CD8-positive, alpha-beta T cell (primary cell): ENCODE measurements at regions of chr12 and their contacts with region 1.

Region 1: GRCh38 chr12:88035271-88035906 is 6.2 kb upstream of the C12orf50 start:
- DNase-seq: peak; percentile 65 to 91 (median 85)
- ATAC-seq: peak; percentile 97
- H3K4me3 ChIP-seq: peak overlapping the region; percentile 75 to 85
- H3K4me3 Mint-ChIP-seq: peak overlapping the region; percentile 96
- H3K27ac ChIP-seq: peak overlapping the region; percentile 67 to 73
- H3K27ac Mint-ChIP-seq: peak overlapping the region; percentile 96
- H3K4me1 ChIP-seq: peaks cover 23% of the 10 kb centered on the region
- H3K4me1 Mint-ChIP-seq: peaks cover 55% of the 10 kb centered on the region
- H3K27me3 ChIP-seq: no peaks in the 10 kb centered on the region
- H3K27me3 Mint-ChIP-seq: no peaks in the 10 kb centered on the region
- CTCF ChIP-seq: no peak

Region 2: GRCh38 chr12:88063375-88063774 is 28.0 kb after region 1 on chr12:
- CTCF ChIA-PET with region 1: no interaction called
- POLR2A ChIA-PET with region 1: no interaction called
- intact Hi-C with region 1: no loop called
- DNase-seq: no peak
- ATAC-seq: no peak
- H3K4me3 ChIP-seq: no peak overlapping the region
- H3K4me3 Mint-ChIP-seq: no peak overlapping the region
- H3K27ac ChIP-seq: no peak overlapping the region
- H3K27ac Mint-ChIP-seq: no peak overlapping the region
- H3K4me1 ChIP-seq: no peaks in the 10 kb centered on the region
- H3K4me1 Mint-ChIP-seq: peaks cover 3% of the 10 kb centered on the region
- H3K27me3 ChIP-seq: no peaks in the 10 kb centered on the region
- H3K27me3 Mint-ChIP-seq: no peaks in the 10 kb centered on the region
- CTCF ChIP-seq: no peak

Region 3: GRCh38 chr12:88111074-88111652 is 75.8 kb after region 1 on chr12:
- CTCF ChIA-PET with region 1: no interaction called
- POLR2A ChIA-PET with region 1: no interaction called
- intact Hi-C with region 1: no loop called
- DNase-seq: peak in 2 of 9 experiments; percentile 29 to 44
- ATAC-seq: no peak
- H3K4me3 ChIP-seq: no peak overlapping the region
- H3K4me3 Mint-ChIP-seq: no peak overlapping the region
- H3K27ac ChIP-seq: no peak overlapping the region
- H3K27ac Mint-ChIP-seq: no peak overlapping the region
- H3K4me1 ChIP-seq: no peaks in the 10 kb centered on the region
- H3K4me1 Mint-ChIP-seq: peaks cover 2% of the 10 kb centered on the region
- H3K27me3 ChIP-seq: no peaks in the 10 kb centered on the region
- H3K27me3 Mint-ChIP-seq: no peaks in the 10 kb centered on the region
- CTCF ChIP-seq: peak; percentile 46

Region 4: GRCh38 chr12:88141770-88142609 is 106.6 kb after region 1 on chr12 and contains the starts of genes CEP290 and TMTC3:
- CTCF ChIA-PET with region 1: no interaction called
- POLR2A ChIA-PET with region 1: interaction called, 8 read pairs
- intact Hi-C with region 1: loop called (anchors 1 kb)
- DNase-seq: peak; percentile 81 to 99 (median 90)
- ATAC-seq: peak; percentile 92
- H3K4me3 ChIP-seq: peak within 1 kb of the TSS; percentile 82 to 84
- H3K4me3 Mint-ChIP-seq: peak within 1 kb of the TSS; percentile 99
- H3K27ac ChIP-seq: peak within 1 kb of the TSS; percentile 75 to 85
- H3K27ac Mint-ChIP-seq: peak within 1 kb of the TSS; percentile 97
- H3K4me1 ChIP-seq: peaks cover 18% of the 10 kb centered on the region
- H3K4me1 Mint-ChIP-seq: peaks cover 48% of the 10 kb centered on the region
- H3K27me3 ChIP-seq: no peaks in the 10 kb centered on the region
- H3K27me3 Mint-ChIP-seq: no peaks in the 10 kb centered on the region
- CTCF ChIP-seq: no peak
- total RNA-seq, gene CEP290: 7.7 to 10.7 TPM
- total RNA-seq, gene TMTC3: 3.9 to 4.4 TPM